ENCODE measurements at regions of chr1 and their contacts with region 1.

Region 1: DNA sequence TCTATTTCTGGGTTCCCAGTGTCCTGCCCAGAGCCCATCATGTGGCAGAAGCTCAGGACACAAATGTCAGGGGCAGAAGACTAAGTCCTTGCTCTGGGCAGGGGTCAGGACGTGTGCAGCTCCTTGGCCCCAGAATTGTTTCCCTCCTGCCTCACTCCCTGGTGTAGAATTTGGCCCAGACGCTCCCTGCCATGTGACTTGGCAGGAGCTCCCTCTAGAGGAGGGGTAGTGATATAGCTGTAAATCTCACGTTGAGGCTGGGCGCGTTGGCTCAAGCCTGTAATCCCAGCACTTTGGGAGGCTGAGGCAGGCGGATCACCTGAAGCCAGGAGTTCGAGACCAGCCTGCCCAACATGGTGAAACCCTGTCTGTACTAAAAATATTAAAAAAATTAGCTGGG is 91.2 kb downstream of the UBIAD1 start:
- DNase-seq: peak in 2 of 14 experiments; percentile 16 to 34
- ATAC-seq: no peak
- H3K4me3 ChIP-seq: no peak overlapping the region
- H3K4me3 Mint-ChIP-seq: no peak overlapping the region
- H3K27ac ChIP-seq: no peak overlapping the region
- H3K27ac Mint-ChIP-seq: no peak overlapping the region
- H3K4me1 ChIP-seq: peaks cover 3% of the 10 kb centered on the region
- H3K4me1 Mint-ChIP-seq: no peaks in the 10 kb centered on the region
- H3K27me3 ChIP-seq: no peaks in the 10 kb centered on the region
- H3K27me3 Mint-ChIP-seq: no peaks in the 10 kb centered on the region
- CTCF ChIP-seq: peak; percentile 21

Region 2: GRCh38 chr1:11248155-11248554 is 116.0 kb before region 1 on chr1:
- CTCF ChIA-PET with region 1: no interaction called
- POLR2A ChIA-PET with region 1: no interaction called
- intact Hi-C with region 1: loop called in 1 of 2 experiments (anchors 5 kb)
- DNase-seq: no peak
- ATAC-seq: no peak
- H3K4me3 ChIP-seq: no peak overlapping the region
- H3K4me3 Mint-ChIP-seq: no peak overlapping the region
- H3K27ac ChIP-seq: no peak overlapping the region
- H3K27ac Mint-ChIP-seq: no peak overlapping the region
- H3K4me1 ChIP-seq: peaks cover 21% of the 10 kb centered on the region
- H3K4me1 Mint-ChIP-seq: peaks cover 25% of the 10 kb centered on the region
- H3K27me3 ChIP-seq: no peaks in the 10 kb centered on the region
- H3K27me3 Mint-ChIP-seq: no peaks in the 10 kb centered on the region
- CTCF ChIP-seq: no peak

Region 3: DNA sequence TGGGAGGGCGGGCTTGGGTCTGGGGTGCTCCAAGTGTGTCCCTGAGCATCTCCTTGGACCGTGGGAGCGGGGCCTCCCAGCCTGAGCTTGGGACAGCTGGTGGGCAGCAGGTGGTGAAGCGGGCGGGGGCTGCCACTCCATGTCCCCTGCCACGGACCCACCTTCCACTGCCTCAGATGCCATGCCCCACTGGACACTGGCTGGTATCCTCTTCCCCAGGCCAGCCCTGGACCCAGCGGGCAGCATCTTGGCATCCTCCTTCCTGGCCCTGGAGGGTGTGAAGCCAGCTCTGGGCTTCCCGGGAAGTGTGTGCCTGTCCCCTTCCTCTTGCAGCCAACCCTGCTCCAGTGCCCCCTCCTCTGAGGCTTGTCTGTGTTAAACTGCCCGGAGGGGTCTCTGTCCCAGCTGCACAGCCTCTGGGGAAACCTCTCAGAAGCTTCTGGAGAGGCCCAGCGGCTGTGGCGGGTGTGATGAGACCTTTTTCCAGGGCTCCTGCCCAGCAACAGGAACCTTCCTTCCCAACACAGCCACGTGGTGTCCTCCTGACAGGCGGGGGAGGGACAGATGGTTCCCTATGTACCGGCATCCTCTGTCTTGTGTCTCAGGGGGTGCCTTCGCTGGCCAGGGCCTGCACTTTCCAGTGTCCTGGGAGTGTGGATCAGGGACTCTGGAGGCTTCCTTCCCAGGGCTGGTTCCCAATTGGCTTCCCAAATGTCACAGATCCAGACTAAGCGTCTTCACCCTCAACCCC is 33.2 kb after region 1 on chr1:
- CTCF ChIA-PET with region 1: no interaction called
- POLR2A ChIA-PET with region 1: no interaction called
- intact Hi-C with region 1: no loop called
- DNase-seq: no peak
- ATAC-seq: no peak
- H3K4me3 ChIP-seq: no peak overlapping the region
- H3K4me3 Mint-ChIP-seq: no peak overlapping the region
- H3K27ac ChIP-seq: no peak overlapping the region
- H3K27ac Mint-ChIP-seq: no peak overlapping the region
- H3K4me1 ChIP-seq: no peaks in the 10 kb centered on the region
- H3K4me1 Mint-ChIP-seq: no peaks in the 10 kb centered on the region
- H3K27me3 ChIP-seq: no peaks in the 10 kb centered on the region
- H3K27me3 Mint-ChIP-seq: no peaks in the 10 kb centered on the region
- CTCF ChIP-seq: no peak

Region 4: DNA sequence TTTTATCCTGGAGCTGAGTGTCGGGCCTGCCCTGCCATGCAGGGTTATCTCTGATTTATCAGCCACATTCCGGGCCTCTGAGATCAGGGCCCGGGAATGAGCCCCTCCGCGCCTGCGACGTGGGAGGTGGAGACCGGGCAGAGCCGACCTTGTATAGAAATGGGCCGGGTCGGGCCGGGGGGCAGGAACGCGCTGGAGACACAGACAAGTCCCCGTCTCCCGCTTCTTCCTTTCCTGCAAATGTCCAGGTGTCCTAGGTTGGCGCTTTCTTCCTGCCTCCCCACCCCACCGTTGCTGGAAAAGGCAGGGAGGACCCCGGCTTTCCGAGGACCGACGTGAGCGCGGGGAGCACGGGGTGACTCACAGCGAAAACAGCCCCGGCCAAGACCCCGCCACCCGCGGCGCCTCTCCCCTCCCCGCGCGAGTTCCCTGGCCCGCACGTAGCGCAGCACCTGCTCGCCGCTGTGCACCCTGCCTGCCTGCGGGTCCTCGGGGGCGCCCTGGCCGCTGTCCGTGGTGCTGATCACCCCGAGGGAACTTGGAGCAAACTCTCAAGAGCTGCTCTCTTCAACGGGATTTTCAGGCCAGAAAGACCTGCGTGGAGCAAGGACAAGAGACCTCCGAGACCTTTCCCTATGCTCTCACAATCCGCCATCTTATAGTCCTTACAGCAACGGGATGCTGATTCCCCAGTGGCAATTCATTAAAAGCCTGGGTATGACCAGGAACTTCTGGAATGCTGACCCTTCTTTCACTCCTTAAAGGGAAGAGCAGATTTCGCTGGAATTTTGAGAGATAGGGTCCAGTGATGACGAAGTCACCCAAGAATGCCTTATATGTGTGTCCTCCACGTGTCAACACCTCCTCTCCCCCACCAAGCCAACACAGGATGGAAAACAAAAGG is 495.1 kb after region 1 on chr1:
- CTCF ChIA-PET with region 1: no interaction called
- POLR2A ChIA-PET with region 1: no interaction called
- intact Hi-C with region 1: no loop called
- DNase-seq: peak; percentile 41 to 80 (median 62)
- ATAC-seq: peak; percentile 94
- H3K4me3 ChIP-seq: no peak overlapping the region
- H3K4me3 Mint-ChIP-seq: no peak overlapping the region
- H3K27ac ChIP-seq: no peak overlapping the region
- H3K27ac Mint-ChIP-seq: no peak overlapping the region
- H3K4me1 ChIP-seq: peaks cover 4% of the 10 kb centered on the region
- H3K4me1 Mint-ChIP-seq: no peaks in the 10 kb centered on the region
- H3K27me3 ChIP-seq: peaks cover 56 to 75% of the 10 kb centered on the region in 2 experiments
- H3K27me3 Mint-ChIP-seq: peaks cover 75% of the 10 kb centered on the region
- CTCF ChIP-seq: no peak

Measured in CD4-positive, alpha-beta T cell (primary cell).